ENCODE measurements at regions of chr7 and their contacts with region 1.

Region 1: DNA sequence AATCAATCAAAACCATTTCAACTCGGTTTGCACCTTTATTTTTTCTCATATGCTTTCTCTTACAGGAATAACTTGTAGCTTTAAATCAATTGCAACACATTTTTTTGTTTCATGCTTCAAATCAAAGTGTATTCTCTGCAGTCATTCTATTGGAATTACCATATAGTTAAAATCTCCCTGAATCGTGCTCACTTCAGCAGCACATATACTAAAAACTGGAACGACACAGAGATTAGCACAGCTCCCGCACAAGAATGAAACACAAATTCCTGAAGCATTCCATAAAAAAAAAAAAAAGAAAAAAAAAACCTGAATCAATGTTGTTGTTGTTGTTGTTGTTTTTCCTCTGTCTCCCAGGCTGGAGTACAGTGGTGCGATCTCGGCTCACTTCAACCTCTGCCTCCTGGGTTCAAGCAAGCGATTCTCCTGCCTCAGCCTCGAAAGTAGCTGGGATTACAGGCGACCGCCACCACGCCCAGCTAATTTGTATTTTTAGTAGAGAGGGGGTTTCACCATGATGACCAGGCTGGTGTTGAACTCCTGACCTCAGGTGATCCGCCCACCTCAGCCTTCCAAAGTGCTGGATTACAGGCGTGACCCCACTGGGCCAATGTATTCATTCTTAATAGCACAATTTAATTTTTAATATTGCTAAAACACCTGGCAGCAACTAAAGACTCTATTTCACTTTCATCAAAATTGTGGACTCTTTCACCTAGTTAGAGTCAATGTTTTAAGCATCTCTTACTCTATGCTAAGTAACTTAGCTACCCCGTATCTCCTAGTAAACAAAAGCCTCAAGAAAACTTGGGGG is 26.3 kb downstream of the ANKRD61 start:
- DNase-seq: no peak
- ATAC-seq: no peak
- H3K4me3 Mint-ChIP-seq: peak overlapping the region; percentile 88 to 100 (median 98)
- H3K27ac Mint-ChIP-seq: peak overlapping the region in 9 of 10 donors; percentile 13 to 98 (median 96)
- H3K4me1 Mint-ChIP-seq: peaks cover 8 to 33% (median 26%) of the 10 kb centered on the region in 4 donors
- H3K27me3 Mint-ChIP-seq: no peaks in the 10 kb centered on the region

Region 2: GRCh38 chr7:6078548-6078947 is 21.0 kb after region 1 on chr7:
- POLR2A ChIA-PET with region 1: no interaction called
- DNase-seq: peak in 1 of 10 donors; percentile 23
- ATAC-seq: no peak
- H3K4me3 Mint-ChIP-seq: no peak overlapping the region
- H3K27ac Mint-ChIP-seq: peak overlapping the region in 1 of 10 donors; percentile 9
- H3K4me1 Mint-ChIP-seq: peaks cover 0 to 13% (median 5%) of the 10 kb centered on the region in 4 donors
- H3K27me3 Mint-ChIP-seq: no peaks in the 10 kb centered on the region

Region 3: DNA sequence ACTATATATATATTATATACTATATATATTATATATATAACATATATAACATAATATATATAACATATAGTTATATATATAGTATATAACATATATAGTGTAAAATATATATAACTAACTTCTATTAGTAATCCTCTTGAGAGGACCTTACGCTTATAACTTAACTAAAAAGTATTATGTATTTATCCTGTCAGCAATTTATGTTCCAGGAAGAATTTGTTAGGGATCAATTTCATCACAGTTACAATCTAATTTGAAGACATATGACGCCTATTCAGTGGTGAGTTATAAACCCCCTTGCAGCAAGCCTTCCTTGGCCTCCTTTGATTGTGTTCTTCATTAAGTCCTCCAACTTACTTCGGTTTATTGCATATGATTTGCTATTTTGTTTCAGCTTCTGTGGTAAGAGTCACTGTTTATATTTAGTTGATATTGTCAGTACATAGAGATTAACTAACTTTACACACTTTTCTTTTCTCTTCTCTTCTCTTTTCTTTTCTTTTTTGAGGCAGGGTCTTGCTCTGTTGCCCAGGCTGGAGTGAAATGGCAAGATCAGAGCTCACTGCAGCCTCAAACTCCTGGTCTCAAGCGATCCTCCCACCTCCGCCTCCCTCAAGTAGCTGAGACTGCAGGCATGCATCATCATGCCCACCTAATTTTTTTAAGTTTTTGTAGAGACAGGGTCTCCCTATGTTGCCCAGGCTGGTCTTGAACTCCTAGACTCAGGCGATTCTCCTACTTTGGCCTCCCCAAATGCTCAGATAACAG is 33.4 kb after region 1 on chr7:
- POLR2A ChIA-PET with region 1: interaction called, 10 read pairs
- DNase-seq: no peak
- ATAC-seq: no peak
- H3K4me3 Mint-ChIP-seq: no peak overlapping the region
- H3K27ac Mint-ChIP-seq: no peak overlapping the region
- H3K4me1 Mint-ChIP-seq: no peaks in the 10 kb centered on the region
- H3K27me3 Mint-ChIP-seq: peaks cover 5 to 33% (median 10%) of the 10 kb centered on the region in 5 donors

Region 4: DNA sequence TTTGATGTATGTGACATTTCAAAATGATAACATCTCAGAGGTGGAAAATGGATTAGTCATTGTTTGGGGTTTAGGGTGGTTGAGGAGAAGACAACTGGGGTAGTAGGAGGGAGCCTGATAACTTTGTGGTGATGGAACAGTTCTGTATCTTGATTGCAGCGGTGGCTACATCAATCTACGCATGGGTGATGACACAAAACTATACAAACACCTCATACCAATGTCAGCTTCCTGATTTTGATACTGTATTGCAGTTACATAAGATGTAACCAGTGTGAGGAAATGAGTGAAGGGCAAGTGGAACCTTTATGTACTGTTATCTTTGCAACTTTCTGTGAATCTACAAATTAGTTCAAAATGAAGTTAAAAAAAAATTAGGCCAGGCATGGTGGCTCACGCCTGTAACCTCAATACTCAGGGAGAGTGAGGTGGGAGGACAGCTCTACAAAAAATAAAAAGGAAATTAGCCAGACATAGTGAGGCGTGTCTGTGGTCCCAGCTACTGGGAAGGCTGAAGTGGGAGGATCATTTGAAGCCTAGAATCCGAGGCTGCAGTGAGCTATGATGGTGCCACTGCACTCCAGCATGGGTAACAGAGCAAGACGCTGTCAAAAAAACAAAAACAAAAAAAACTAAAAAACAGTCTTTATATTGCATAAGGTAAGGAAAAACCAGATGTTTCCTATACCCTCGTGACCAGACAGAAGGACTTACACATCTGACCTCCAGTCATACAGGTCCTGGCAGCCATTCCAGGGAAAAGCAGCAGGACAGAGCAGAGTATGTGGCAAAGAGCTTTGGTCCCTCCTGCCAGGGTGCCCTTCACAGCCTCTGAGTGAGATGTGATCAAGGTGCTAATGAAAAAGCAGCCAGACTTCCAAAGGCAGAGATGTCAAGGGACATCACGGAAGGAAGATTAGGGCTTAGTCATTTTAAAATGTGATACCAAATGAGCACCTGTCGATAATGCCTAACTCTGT is 164.1 kb after region 1 on chr7:
- POLR2A ChIA-PET with region 1: interaction called, 10 read pairs
- DNase-seq: peak in 3 of 10 donors; percentile 6 to 31 (median 7)
- ATAC-seq: peak; percentile 53 to 58
- H3K4me3 Mint-ChIP-seq: peak overlapping the region in 2 of 10 donors; percentile 62 to 73
- H3K27ac Mint-ChIP-seq: peak overlapping the region in 7 of 10 donors; percentile 9 to 87 (median 74)
- H3K4me1 Mint-ChIP-seq: peaks cover 3 to 29% (median 6%) of the 10 kb centered on the region in 4 donors
- H3K27me3 Mint-ChIP-seq: no peaks in the 10 kb centered on the region

Measured in naive thymus-derived CD8-positive, alpha-beta T cell (primary cell).